ENCODE measurements at regions of chr13 and their contacts with region 1.

Region 1: DNA sequence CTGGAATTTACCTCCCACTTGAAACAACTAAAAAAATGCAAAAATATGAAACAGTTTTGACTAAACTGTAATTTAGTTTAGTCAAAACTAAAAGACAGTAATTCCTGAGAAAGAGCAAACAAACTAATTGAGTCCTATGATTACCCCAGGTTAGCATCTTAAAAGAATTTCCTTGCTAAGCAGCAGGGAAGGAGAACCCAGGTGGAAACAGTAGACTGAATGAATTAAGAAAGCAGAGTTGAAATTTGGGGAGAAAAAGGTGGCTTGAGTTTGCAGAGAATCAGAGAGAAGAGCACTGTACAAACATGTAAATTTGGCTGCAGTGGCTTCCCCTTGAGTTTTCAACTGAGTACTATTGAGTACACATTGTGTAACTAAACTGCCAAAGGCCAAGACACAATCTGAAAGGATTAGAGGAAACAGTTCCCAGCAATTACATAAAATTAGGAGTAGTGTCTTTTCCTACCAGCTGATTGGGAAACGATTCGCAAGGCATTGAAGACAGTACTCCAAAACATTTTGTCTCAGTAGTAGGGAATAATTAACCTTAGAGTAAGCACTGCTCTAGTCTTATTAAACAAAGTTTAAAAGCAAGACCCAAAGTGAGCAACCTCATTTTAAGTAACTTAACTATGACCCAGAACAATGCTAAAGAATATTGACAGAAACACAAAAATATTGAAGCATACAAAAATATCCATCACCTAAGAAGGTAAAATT is 820.5 kb downstream of the DACH1 start:
- DNase-seq: no peak
- H3K4me3 ChIP-seq: no peak overlapping the region
- H3K27ac ChIP-seq: no peak overlapping the region
- H3K4me1 ChIP-seq: no peaks in the 10 kb centered on the region
- H3K27me3 ChIP-seq: no peaks in the 10 kb centered on the region
- CTCF ChIP-seq: no peak
- EP300 ChIP-seq: no peak
- POLR2A ChIP-seq: no peak

Region 2: DNA sequence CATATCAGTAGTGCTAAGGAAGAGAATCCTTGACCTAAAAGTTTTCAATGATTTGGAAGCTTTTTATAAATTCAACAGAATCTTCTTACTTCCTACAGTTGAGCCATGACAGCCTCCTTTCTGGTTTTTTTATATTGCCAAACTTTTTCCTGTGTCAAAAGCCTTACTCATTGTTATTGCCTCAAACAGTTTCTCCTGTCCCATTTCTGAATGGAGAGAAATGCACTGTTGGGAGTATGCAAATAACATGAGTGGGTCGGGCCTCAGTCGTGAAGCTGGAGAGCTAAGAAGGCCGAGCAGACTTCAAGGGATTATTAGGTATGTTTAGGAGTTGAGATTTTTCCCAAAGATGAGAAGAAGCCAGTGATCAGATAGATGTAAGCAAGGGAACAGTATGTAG is 171.9 kb before region 1 on chr13:
- in situ Hi-C with region 1: no loop called
- intact Hi-C with region 1: loop called (anchors 5 kb)
- DNase-seq: no peak
- H3K4me3 ChIP-seq: no peak overlapping the region
- H3K27ac ChIP-seq: no peak overlapping the region
- H3K4me1 ChIP-seq: no peaks in the 10 kb centered on the region
- H3K27me3 ChIP-seq: no peaks in the 10 kb centered on the region
- CTCF ChIP-seq: no peak
- EP300 ChIP-seq: no peak
- POLR2A ChIP-seq: no peak